ENCODE measurements at regions of chr22 and their contacts with region 1.

Region 1: DNA sequence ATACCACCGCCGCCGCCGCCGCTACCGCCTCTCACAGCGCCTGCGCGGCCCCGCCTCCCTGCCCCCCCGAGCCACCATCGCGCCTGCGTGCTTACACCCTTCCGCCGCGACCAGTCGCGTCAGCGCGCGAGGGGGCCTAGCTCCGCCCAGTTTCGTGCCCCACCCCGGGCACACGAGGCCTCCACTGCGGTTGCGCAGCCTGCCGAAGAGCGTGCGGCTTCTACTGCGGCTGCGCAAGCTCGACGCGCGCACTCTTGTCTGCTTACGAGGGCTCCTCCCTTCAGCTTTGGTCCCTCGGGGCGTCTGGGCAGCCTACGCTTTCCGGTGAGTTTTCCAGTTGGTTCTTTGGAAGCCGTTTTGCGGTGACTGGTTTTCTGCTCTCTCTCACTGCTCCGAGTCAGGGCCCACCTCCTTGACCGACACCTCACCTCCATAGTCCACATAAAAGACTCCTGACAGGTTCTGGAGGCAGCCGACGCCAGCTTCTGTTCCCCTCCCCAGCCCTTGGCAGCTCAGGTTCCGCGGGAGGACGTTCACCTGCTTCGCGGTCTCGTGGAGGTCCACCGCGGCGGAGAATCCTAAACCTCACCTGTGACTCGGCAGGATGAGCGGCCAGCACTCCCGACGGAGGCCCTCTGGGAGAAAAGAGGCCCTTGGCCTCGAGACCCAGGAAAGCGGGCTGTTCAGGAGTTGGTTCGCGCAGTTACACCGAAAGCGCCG is at the start of gene PITPNB:
- DNase-seq: peak; percentile 99
- ATAC-seq: peak; percentile 93
- H3K4me3 Mint-ChIP-seq: peak within 1 kb of the TSS; percentile 97
- H3K27ac Mint-ChIP-seq: peak within 1 kb of the TSS; percentile 98
- H3K4me1 Mint-ChIP-seq: peaks cover 56% of the 10 kb centered on the region
- H3K27me3 Mint-ChIP-seq: no peaks in the 10 kb centered on the region
- total RNA-seq, gene PITPNB: 96.5 to 111 TPM

Region 2: GRCh38 chr22:26589845-26590736 is 1329.3 kb before region 1 on chr22 and contains the start of gene TPST2:
- CTCF ChIA-PET with region 1: no interaction called
- POLR2A ChIA-PET with region 1: no interaction called
- intact Hi-C with region 1: loop called in 1 of 2 experiments (anchors 5 kb)
- DNase-seq: peak; percentile 87
- ATAC-seq: peak; percentile 84
- H3K4me3 Mint-ChIP-seq: peak within 1 kb of the TSS; percentile 90
- H3K27ac Mint-ChIP-seq: peak within 1 kb of the TSS; percentile 86
- H3K4me1 Mint-ChIP-seq: peaks cover 47% of the 10 kb centered on the region
- H3K27me3 Mint-ChIP-seq: no peaks in the 10 kb centered on the region
- total RNA-seq, gene TPST2: 17.4 to 18.3 TPM

Region 3: DNA sequence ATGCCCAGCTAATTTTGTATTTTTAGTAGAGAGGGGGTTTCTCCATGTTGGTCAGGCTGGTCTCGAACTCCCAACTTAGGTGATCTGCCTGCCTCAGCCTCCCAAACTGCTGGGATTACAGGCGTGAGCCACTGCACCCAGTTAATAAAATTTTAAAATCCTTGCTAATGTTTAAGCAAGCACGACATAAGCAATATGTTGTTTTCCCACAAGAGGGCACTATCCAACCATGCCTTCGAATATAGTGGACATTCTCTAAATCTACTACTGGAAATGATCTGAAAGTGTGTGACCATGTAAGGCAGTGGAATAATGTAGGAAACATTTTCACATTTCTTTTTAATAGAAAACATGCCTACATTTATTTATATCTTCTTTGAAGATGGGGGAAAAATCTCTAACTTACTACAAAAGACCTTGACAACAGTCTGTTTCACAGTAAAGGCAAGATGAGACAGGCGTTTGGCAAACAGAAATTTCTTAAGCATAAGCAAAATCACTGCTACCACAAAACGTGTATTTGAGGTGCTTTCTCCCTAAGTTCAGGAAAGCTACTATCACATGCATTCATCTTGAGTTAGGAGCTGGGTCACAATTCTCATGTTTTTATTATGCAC is 38.5 kb before region 1 on chr22:
- CTCF ChIA-PET with region 1: interaction called, 8 read pairs
- POLR2A ChIA-PET with region 1: no interaction called
- intact Hi-C with region 1: loop called in 1 of 2 experiments (anchors 5 kb)
- DNase-seq: peak; percentile 17
- ATAC-seq: no peak
- H3K4me3 Mint-ChIP-seq: no peak overlapping the region
- H3K27ac Mint-ChIP-seq: no peak overlapping the region
- H3K4me1 Mint-ChIP-seq: peaks cover 24% of the 10 kb centered on the region
- H3K27me3 Mint-ChIP-seq: no peaks in the 10 kb centered on the region

Region 4: DNA sequence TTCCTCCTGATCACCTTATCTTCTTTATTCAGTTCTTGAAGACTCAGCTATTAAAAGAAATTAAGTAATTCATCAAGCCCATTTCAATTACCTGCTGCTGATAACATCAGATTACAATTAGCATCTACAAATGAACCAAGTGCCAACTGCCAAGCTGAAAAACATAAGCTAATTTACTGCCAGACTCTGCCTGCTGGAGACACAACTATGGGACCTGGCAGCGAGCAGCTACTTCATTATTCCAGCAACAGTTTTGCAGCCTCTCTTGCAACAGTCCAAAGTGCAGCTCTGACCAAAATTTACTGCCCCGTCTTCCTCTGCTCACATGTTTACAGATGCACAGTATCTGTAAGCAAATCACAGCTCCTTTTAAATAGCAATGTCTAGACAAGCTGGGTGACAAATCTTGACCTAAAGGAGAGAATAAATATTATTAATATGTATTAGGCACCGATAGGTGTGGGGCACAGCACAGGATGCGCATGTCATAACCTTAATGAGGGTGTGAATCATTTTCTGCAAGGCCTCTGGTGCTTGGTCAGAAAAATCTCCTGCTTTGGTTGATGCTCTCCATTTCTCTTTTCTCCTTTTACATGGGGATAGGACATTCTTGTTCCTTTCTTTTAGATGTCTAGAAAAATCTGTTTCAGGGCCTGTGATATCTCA is 231.9 kb after region 1 on chr22:
- CTCF ChIA-PET with region 1: no interaction called
- POLR2A ChIA-PET with region 1: no interaction called
- intact Hi-C with region 1: no loop called
- DNase-seq: no peak
- ATAC-seq: no peak
- H3K4me3 Mint-ChIP-seq: no peak overlapping the region
- H3K27ac Mint-ChIP-seq: no peak overlapping the region
- H3K4me1 Mint-ChIP-seq: no peaks in the 10 kb centered on the region
- H3K27me3 Mint-ChIP-seq: no peaks in the 10 kb centered on the region

Region 5: DNA sequence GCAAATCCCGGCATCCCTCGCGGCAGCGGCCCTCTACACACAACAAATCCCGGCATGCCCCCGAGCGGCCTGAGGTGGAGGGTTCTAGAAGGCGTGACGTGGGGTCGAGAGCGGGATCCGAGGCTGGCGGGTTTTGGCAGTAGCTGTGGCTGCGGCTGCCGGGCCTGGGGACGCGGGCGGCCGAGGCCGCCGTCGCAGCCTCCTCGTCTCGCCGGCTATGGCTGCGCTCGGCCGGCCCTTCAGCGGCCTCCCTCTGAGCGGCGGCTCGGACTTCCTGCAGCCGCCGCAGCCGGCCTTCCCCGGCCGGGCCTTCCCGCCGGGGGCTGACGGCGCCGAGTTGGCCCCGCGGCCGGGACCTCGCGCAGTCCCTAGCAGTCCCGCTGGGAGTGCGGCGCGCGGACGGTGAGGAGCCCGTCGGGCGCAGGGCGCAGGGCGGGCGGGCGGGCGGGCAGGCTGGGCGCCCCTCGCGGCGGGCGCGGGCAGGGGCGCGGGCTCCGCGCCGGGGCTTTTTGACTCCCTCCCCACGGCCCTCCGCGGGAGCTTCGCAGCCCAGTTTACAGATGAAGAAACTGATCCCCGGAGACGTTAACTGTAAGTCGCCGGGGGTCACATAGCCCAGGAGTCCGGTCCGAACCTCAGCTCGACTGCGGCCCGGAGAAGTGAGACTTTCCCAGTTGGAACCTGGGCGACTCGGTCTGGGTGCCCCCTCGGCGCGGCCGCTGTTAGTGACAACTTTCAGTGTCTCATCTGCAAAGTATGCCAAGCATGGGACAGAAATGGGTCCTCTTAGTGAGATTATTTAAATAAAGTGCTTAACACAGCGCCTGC is 853.5 kb after region 1 on chr22 and contains the start of gene CCDC117:
- CTCF ChIA-PET with region 1: no interaction called
- POLR2A ChIA-PET with region 1: no interaction called
- intact Hi-C with region 1: loop called in 1 of 2 experiments (anchors 1 kb)
- DNase-seq: peak; percentile 96
- ATAC-seq: peak; percentile 91
- H3K4me3 Mint-ChIP-seq: peak within 1 kb of the TSS; percentile 94
- H3K27ac Mint-ChIP-seq: peak within 1 kb of the TSS; percentile 99
- H3K4me1 Mint-ChIP-seq: peaks cover 19% of the 10 kb centered on the region
- H3K27me3 Mint-ChIP-seq: no peaks in the 10 kb centered on the region
- total RNA-seq, gene CCDC117: 36.1 to 36.8 TPM

Region 6: GRCh38 chr22:28882878-28883656 is 963.7 kb after region 1 on chr22 and contains the start of gene ZNRF3:
- CTCF ChIA-PET with region 1: no interaction called
- POLR2A ChIA-PET with region 1: no interaction called
- intact Hi-C with region 1: loop called in 1 of 2 experiments (anchors 1 kb)
- DNase-seq: peak; percentile 96
- ATAC-seq: peak; percentile 91
- H3K4me3 Mint-ChIP-seq: peak within 1 kb of the TSS; percentile 75
- H3K27ac Mint-ChIP-seq: peak within 1 kb of the TSS; percentile 83
- H3K4me1 Mint-ChIP-seq: peaks cover 18% of the 10 kb centered on the region
- H3K27me3 Mint-ChIP-seq: peaks cover 26% of the 10 kb centered on the region
- total RNA-seq, gene ZNRF3: 2.3 TPM

Region 7: GRCh38 chr22:29267858-29268417 is 1348.6 kb after region 1 on chr22 and contains the starts of genes EWSR1 and RHBDD3:
- CTCF ChIA-PET with region 1: no interaction called
- POLR2A ChIA-PET with region 1: no interaction called
- intact Hi-C with region 1: loop called in 1 of 2 experiments (anchors 2 kb)
- DNase-seq: peak; percentile 96
- ATAC-seq: peak; percentile 85
- H3K4me3 Mint-ChIP-seq: peak within 1 kb of the TSS; percentile 91
- H3K27ac Mint-ChIP-seq: peak within 1 kb of the TSS; percentile 97
- H3K4me1 Mint-ChIP-seq: peaks cover 37% of the 10 kb centered on the region
- H3K27me3 Mint-ChIP-seq: no peaks in the 10 kb centered on the region
- total RNA-seq, gene EWSR1: 326 to 567 TPM
- total RNA-seq, gene RHBDD3: 23.2 to 25.3 TPM

Measured in activated CD4-positive, alpha-beta T cell treated with anti-CD3 and anti-CD28 coated beads for 36 hours (primary cell).